ENCODE measurements at regions of chr6 and their contacts with region 1.

Region 1: GRCh38 chr6:29705389-29706231 is 17.6 kb upstream of the HLA-F start:
- DNase-seq: peak in 2 of 3 donors; percentile 26 to 28
- H3K4me3 ChIP-seq: no peak overlapping the region
- H3K27ac ChIP-seq: no peak overlapping the region
- H3K4me1 ChIP-seq: peaks cover 0 to 22% (median 12%) of the 10 kb centered on the region in 4 experiments
- H3K27me3 ChIP-seq: peaks cover 0 to 14% (median 2%) of the 10 kb centered on the region in 5 experiments

Region 2: DNA sequence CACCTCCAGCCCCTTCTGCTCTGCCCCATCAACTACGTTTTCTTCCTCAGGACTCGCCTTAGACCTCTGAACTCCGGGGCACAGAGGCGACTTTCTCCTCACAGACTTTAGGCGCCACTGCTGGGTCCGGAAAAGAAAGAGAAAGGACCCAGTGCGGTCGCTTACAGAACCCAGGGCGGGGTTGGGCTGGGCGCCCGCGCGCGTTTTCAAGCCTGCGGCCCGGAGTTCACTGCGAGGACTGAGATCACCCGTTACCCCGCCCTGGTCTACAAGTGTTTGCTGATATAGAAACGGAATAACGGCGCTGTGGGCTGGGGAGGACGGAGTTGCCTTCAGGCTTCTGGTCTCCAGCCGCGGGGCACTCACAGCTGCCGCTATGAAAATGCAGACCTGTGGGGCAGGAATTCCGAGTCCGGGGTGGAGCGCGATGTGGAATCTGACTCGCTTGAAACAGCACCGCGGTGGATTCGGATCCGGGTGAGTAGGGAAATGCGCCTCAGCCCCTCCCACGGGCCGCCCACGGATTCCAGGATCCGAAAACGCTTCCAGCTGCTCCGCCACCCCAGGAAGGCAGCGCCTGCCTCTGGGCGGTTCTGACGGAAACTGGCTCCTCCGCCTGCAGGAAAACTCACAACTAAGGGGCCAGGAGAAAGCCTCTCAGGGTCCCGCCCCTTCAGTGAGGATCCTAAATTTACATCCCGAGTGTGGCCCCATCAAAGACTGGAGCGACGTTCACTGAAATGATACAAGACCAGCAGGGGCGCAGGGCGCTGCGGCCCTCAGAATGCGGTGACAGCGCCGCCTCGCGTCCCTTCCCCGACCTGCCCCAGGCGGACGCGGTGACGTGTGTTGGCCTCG is 47.1 kb after region 1 on chr6:
- CTCF ChIA-PET with region 1: interaction called, 13 read pairs
- POLR2A ChIA-PET with region 1: no interaction called
- DNase-seq: peak; percentile 82 to 90 (median 88)
- H3K4me3 ChIP-seq: peak overlapping the region; percentile 75 to 97 (median 84)
- H3K27ac ChIP-seq: peak overlapping the region; percentile 40 to 81
- H3K4me1 ChIP-seq: peaks cover 8 to 33% (median 18%) of the 10 kb centered on the region in 4 experiments
- H3K27me3 ChIP-seq: peaks cover 0 to 9% (median 7%) of the 10 kb centered on the region in 5 experiments

Region 3: GRCh38 chr6:29834564-29835436 is 129.2 kb after region 1 on chr6:
- CTCF ChIA-PET with region 1: interaction called, 14 read pairs
- POLR2A ChIA-PET with region 1: no interaction called
- DNase-seq: peak; percentile 23 to 50 (median 41)
- H3K4me3 ChIP-seq: no peak overlapping the region
- H3K27ac ChIP-seq: no peak overlapping the region
- H3K4me1 ChIP-seq: no peaks in the 10 kb centered on the region
- H3K27me3 ChIP-seq: peaks cover 15 to 63% (median 17%) of the 10 kb centered on the region in 5 experiments

Region 4: DNA sequence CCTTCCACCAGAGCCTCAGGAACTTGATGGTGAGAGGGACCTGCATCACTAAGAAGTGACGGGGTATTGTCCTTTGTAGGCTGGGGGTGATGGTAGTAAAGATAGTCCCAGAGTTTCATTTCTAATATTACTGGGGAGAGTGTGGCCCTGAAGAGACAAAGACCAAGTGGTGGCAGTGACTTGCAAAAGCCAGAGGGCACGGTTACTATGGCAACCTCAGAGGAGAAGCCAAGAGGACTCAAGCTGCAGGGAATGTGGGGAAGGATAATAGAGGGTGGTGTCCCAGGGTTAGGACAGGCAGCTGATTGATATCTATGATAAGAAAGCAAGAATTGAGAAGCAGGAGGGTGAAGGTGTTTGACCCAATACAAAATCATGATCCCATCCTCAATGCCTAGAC is 164.5 kb after region 1 on chr6:
- CTCF ChIA-PET with region 1: no interaction called
- POLR2A ChIA-PET with region 1: no interaction called
- DNase-seq: peak; percentile 40 to 88 (median 85)
- H3K4me3 ChIP-seq: no peak overlapping the region
- H3K27ac ChIP-seq: no peak overlapping the region
- H3K4me1 ChIP-seq: peaks cover 0 to 4% (median 1%) of the 10 kb centered on the region in 4 experiments
- H3K27me3 ChIP-seq: peaks cover 0 to 9% (median 3%) of the 10 kb centered on the region in 5 experiments

Measured in common myeloid progenitor, CD34-positive (primary cell).